ENCODE measurements at regions of chr13 and their contacts with region 1.

Region 1: DNA sequence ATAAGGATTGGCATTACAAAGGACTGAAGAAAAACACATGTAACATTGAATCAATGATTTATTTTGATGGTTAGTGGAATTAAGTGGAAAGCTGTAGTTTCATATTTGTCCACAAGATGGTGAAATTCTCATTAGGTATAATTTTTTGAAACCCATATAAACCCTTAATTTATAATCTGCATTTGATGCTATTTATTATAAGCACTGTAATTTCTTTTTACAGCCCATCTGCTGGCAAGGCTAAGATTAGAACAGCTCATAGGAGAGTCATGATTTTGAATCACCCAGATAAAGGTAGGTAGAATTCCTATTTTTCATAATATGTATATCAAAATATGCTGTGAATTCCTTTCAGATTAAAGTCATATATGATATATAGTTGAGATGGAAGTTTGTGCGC is 62.2 kb downstream of the DNAJC15 start:
- DNase-seq: peak; percentile 29
- H3K4me3 ChIP-seq: no peak overlapping the region
- H3K27ac ChIP-seq: no peak overlapping the region
- H3K4me1 ChIP-seq: no peaks in the 10 kb centered on the region
- CTCF ChIP-seq: peak; percentile 84

Region 2: GRCh38 chr13:43111559-43112400 is 26.2 kb after region 1 on chr13:
- CTCF ChIA-PET with region 1: interaction called, 12 read pairs
- POLR2A ChIA-PET with region 1: no interaction called
- intact Hi-C with region 1: no loop called
- DNase-seq: no peak
- H3K4me3 ChIP-seq: no peak overlapping the region
- H3K27ac ChIP-seq: no peak overlapping the region
- H3K4me1 ChIP-seq: no peaks in the 10 kb centered on the region
- CTCF ChIP-seq: no peak

Region 3: GRCh38 chr13:43232874-43233266 is 147.3 kb after region 1 on chr13:
- CTCF ChIA-PET with region 1: no interaction called
- POLR2A ChIA-PET with region 1: no interaction called
- intact Hi-C with region 1: loop called (anchors 10 kb)
- DNase-seq: no peak
- H3K4me3 ChIP-seq: no peak overlapping the region
- H3K27ac ChIP-seq: no peak overlapping the region
- H3K4me1 ChIP-seq: no peaks in the 10 kb centered on the region
- CTCF ChIP-seq: no peak

Region 4: DNA sequence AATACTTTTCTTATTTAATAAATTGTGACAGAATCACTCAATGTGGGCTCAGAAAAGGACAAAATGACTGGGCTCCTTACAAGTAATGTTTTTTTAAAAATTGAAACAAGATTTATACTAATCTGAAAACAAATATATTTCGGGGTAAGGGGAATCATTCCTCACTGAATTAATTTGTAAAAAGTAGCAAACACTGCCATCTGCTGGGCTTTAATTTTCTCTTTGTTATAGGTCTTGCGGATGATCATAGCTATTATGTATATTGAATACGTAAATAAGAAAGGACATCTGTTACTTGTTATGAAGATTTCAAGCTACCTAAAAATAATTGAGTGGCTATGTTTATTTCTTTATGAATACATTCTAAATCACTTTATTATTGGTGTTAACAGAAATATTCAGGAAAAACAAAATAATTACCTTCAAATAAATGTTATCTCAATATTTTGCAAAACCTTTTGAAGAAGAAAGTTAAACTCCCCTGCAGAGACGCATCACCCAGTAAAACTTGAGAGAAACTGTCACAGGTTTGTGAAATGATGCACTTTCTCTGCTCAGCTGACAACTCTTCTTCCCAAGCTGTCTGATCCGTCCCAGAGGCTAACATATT is 719.0 kb after region 1 on chr13:
- CTCF ChIA-PET with region 1: no interaction called
- POLR2A ChIA-PET with region 1: no interaction called
- intact Hi-C with region 1: loop called (anchors 2 kb)
- DNase-seq: peak; percentile 61
- H3K4me3 ChIP-seq: no peak overlapping the region
- H3K27ac ChIP-seq: no peak overlapping the region
- H3K4me1 ChIP-seq: no peaks in the 10 kb centered on the region
- CTCF ChIP-seq: peak; percentile 88

Region 5: GRCh38 chr13:43865892-43866291 is 780.3 kb after region 1 on chr13:
- CTCF ChIA-PET with region 1: no interaction called
- POLR2A ChIA-PET with region 1: no interaction called
- intact Hi-C with region 1: loop called (anchors 5 kb)
- DNase-seq: no peak
- H3K4me3 ChIP-seq: no peak overlapping the region
- H3K27ac ChIP-seq: no peak overlapping the region
- H3K4me1 ChIP-seq: no peaks in the 10 kb centered on the region
- CTCF ChIP-seq: no peak

Measured in OCI-LY7 (cell line).